ENCODE measurements at regions of chr6 and their contacts with region 1.

Region 1: GRCh38 chr6:12504319-12504966 is 212.1 kb upstream of the PHACTR1 start:
- DNase-seq: peak; percentile 25
- H3K4me3 ChIP-seq: no peak overlapping the region
- H3K27ac ChIP-seq: no peak overlapping the region
- H3K4me1 ChIP-seq: peaks cover 10% of the 10 kb centered on the region
- H3K27me3 ChIP-seq: no peaks in the 10 kb centered on the region
- CTCF ChIP-seq: peak; percentile 54 to 81

Region 2: GRCh38 chr6:12313992-12314805 is 190.2 kb before region 1 on chr6:
- CTCF ChIA-PET with region 1: no interaction called
- dilution Hi-C with region 1: no loop called
- in situ Hi-C with region 1: loop called in 1 of 2 experiments (anchors 25 kb)
- intact Hi-C with region 1: loop called (anchors 1 kb)
- DNase-seq: peak; percentile 90
- H3K4me3 ChIP-seq: no peak overlapping the region
- H3K27ac ChIP-seq: peak overlapping the region; percentile 83
- H3K4me1 ChIP-seq: peaks cover 23% of the 10 kb centered on the region
- H3K27me3 ChIP-seq: no peaks in the 10 kb centered on the region
- CTCF ChIP-seq: no peak

Region 3: GRCh38 chr6:12395898-12396297 is 108.5 kb before region 1 on chr6:
- CTCF ChIA-PET with region 1: no interaction called
- dilution Hi-C with region 1: no loop called
- in situ Hi-C with region 1: no loop called
- intact Hi-C with region 1: loop called (anchors 1 kb)
- DNase-seq: no peak
- H3K4me3 ChIP-seq: no peak overlapping the region
- H3K27ac ChIP-seq: no peak overlapping the region
- H3K4me1 ChIP-seq: no peaks in the 10 kb centered on the region
- H3K27me3 ChIP-seq: no peaks in the 10 kb centered on the region
- CTCF ChIP-seq: peak in 1 of 2 donors; percentile 43

Region 4: GRCh38 chr6:12516070-12516469 is 11.6 kb after region 1 on chr6:
- CTCF ChIA-PET with region 1: interaction called, 10 read pairs
- dilution Hi-C with region 1: no loop called
- in situ Hi-C with region 1: no loop called
- intact Hi-C with region 1: no loop called
- DNase-seq: no peak
- H3K4me3 ChIP-seq: no peak overlapping the region
- H3K27ac ChIP-seq: no peak overlapping the region
- H3K4me1 ChIP-seq: no peaks in the 10 kb centered on the region
- H3K27me3 ChIP-seq: no peaks in the 10 kb centered on the region
- CTCF ChIP-seq: no peak